Gastrocnemius medialis (tissue), 4 donors: ENCODE measurements at regions of chr2 and their contacts with region 1.

Region 1: DNA sequence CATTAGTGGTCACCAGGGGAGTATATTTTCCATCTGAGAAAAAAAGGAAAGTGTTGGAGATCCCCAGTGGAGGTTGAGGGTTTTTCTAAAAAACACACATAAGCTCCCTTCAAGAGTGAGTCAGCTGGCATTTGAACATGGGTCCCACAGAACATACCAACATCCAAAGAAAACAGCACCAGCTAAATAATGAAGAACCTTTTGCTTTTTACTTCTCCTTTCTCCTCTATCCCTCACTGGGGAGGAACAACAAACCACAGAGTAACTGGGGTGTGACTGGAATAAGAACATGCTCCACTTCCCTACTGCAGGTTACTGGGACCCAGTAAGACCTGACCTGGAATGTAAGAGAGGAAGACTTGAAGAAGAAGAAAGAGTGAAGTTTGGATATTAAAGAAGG is 56.5 kb upstream of the RAPH1 start:
- DNase-seq: no peak
- ATAC-seq: no peak
- H3K4me3 ChIP-seq: no peak overlapping the region
- H3K27ac ChIP-seq: no peak overlapping the region
- H3K4me1 ChIP-seq: no peaks in the 10 kb centered on the region
- H3K27me3 ChIP-seq: no peaks in the 10 kb centered on the region
- CTCF ChIP-seq: no peak
- POLR2A ChIP-seq: no peak

Region 2: GRCh38 chr2:203143391-203143790 is 448.3 kb before region 1 on chr2:
- in situ Hi-C with region 1: no loop called
- intact Hi-C with region 1: no loop called
- DNase-seq: no peak
- ATAC-seq: no peak
- H3K4me3 ChIP-seq: no peak overlapping the region
- H3K27ac ChIP-seq: no peak overlapping the region
- H3K4me1 ChIP-seq: no peaks in the 10 kb centered on the region
- H3K27me3 ChIP-seq: no peaks in the 10 kb centered on the region
- CTCF ChIP-seq: no peak
- POLR2A ChIP-seq: no peak

Region 3: DNA sequence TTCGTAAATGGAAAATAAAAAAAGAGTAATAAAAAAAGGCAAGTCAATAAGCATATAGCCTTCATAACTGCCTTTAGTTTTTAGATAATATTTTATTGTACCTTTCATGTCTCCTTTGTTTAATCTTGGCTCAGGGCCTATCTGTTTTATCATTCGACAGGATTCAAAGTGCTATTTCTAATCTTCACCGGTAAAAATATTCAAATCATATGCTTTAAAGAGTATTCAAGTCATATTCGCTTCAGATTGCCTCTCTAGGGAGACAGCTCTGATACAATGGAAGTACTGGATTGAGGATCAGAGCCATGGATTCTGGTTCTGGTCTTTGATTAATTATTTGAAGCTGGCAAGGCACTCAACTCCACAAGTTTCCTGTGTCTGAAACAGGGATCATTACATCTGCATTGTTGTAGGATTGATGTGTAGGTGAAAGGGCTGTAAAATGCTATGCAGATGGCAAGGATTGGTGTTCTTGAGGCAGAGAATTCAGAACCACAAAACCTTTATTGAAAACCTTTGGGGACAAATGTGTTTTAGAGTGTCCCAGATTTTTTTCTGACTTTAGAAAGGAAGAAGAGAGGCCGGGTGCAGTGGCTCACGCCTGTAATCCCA is 27.7 kb after region 1 on chr2:
- in situ Hi-C with region 1: no loop called
- intact Hi-C with region 1: loop called (anchors 1 kb)
- DNase-seq: no peak
- ATAC-seq: no peak
- H3K4me3 ChIP-seq: no peak overlapping the region
- H3K27ac ChIP-seq: no peak overlapping the region
- H3K4me1 ChIP-seq: no peaks in the 10 kb centered on the region
- H3K27me3 ChIP-seq: no peaks in the 10 kb centered on the region
- CTCF ChIP-seq: no peak
- POLR2A ChIP-seq: no peak